ENCODE measurements at regions of chr10 and their contacts with region 1.

Region 1: GRCh38 chr10:109838592-109839244 is 84.6 kb downstream of the XPNPEP1 start:
- DNase-seq: no peak
- H3K4me3 ChIP-seq: no peak overlapping the region
- H3K4me3 Mint-ChIP-seq: no peak overlapping the region
- H3K27ac ChIP-seq: no peak overlapping the region
- H3K27ac Mint-ChIP-seq: no peak overlapping the region
- H3K4me1 ChIP-seq: no peaks in the 10 kb centered on the region
- H3K4me1 Mint-ChIP-seq: no peaks in the 10 kb centered on the region
- H3K27me3 ChIP-seq: no peaks in the 10 kb centered on the region
- H3K27me3 Mint-ChIP-seq: peaks cover 6 to 11% of the 10 kb centered on the region in 2 donors

Region 2: DNA sequence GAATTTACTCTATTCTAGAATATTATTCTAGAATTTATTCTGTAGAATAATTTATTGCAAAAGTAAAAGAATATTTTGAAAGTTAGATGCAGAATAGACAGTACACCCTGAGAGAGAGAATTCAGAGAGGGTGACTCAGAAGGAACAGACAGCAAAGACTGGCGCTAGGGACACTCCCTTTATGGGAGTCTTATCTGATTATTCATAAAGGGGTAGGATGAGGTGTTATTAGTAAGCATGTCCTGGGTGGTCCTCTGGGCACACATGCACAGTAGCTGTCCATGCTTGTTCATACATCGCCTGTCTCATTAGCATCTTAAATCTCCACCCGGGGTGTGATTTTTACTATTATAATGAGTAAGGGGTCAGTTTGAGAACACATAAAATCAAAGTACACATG is 15.5 kb before region 1 on chr10:
- CTCF ChIA-PET with region 1: no interaction called
- POLR2A ChIA-PET with region 1: no interaction called
- intact Hi-C with region 1: no loop called
- DNase-seq: no peak
- H3K4me3 ChIP-seq: no peak overlapping the region
- H3K4me3 Mint-ChIP-seq: no peak overlapping the region
- H3K27ac ChIP-seq: no peak overlapping the region
- H3K27ac Mint-ChIP-seq: no peak overlapping the region
- H3K4me1 ChIP-seq: no peaks in the 10 kb centered on the region
- H3K4me1 Mint-ChIP-seq: no peaks in the 10 kb centered on the region
- H3K27me3 ChIP-seq: no peaks in the 10 kb centered on the region
- H3K27me3 Mint-ChIP-seq: peaks cover 5 to 21% of the 10 kb centered on the region in 2 donors

Region 3: GRCh38 chr10:109852475-109853037 is 13.8 kb after region 1 on chr10:
- CTCF ChIA-PET with region 1: interaction called, 12 read pairs
- POLR2A ChIA-PET with region 1: no interaction called
- intact Hi-C with region 1: no loop called
- DNase-seq: peak; percentile 49 to 59 (median 54)
- H3K4me3 ChIP-seq: no peak overlapping the region
- H3K4me3 Mint-ChIP-seq: peak overlapping the region in 5 of 8 donors; percentile 0 to 57 (median 7)
- H3K27ac ChIP-seq: no peak overlapping the region
- H3K27ac Mint-ChIP-seq: peak overlapping the region in 1 of 7 donors; percentile 12
- H3K4me1 ChIP-seq: peaks cover 8% of the 10 kb centered on the region
- H3K4me1 Mint-ChIP-seq: peaks cover 10 to 16% (median 12%) of the 10 kb centered on the region in 4 donors
- H3K27me3 ChIP-seq: no peaks in the 10 kb centered on the region
- H3K27me3 Mint-ChIP-seq: peaks cover 0 to 1% of the 10 kb centered on the region in 2 donors

Measured in CD4-positive, alpha-beta memory T cell (primary cell).